H1 (cell line): ENCODE measurements at regions of chr5 and their contacts with region 1.

Region 1: DNA sequence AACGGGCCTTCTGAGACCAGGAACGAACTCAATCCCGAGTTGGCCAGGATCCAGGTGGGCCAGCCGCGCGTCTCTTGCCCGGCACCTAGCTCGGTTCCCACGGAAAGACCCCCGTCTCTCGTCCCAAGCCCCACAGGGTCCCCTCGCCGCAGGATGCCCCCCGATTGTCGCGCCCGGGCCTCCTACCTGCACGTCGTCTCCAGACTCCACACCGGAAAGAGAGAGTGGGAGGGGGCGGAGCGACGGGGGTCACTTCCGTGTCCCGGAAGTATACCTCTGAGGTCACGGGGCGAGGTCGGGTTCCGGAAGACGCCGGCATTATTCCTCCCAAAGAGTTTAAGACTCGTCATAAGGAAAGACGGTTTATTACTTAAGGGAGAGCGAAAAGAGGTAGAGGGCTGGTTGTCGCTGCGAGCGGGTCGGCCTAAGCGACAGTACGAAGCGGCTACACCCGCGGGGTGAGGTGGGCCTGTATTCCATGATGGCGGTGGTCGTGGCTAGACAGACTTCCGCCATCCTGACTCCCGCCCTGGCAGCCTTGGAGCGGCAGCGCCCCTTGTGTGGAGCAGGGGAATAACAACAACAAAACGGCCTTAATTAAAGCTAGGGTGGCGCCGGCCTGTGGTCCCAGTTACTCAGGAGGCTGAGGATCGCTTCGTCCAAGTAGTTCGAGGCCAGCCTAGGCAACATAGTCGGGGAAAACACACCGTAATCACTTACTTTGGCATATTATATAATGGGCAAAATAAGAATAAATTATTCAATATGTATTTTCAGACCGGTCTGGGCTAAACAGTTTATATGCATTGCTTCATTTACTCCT is at the start of gene RPS14:
- DNase-seq: peak; percentile 77 to 96
- H3K4me3 ChIP-seq: peak within 1 kb of the TSS; percentile 97 to 100 (median 98)
- H3K27ac ChIP-seq: peak within 1 kb of the TSS; percentile 99
- H3K4me1 ChIP-seq: peaks cover 0 to 15% (median 8%) of the 10 kb centered on the region in 4 experiments; a peak in 6 of 7 replicates
- H3K27me3 ChIP-seq: no peaks in the 10 kb centered on the region
- CTCF ChIP-seq: peak; percentile 78 to 93 (median 85)
- EP300 ChIP-seq: peak in 1 of 2 experiments; percentile 21; a peak in 1 of 3 replicates
- POLR2A ChIP-seq: peak; percentile 90 to 98
- RAD21 ChIP-seq: peak; percentile 33 to 46; a peak in 3 of 4 replicates
- total RNA-seq, gene RPS14: 2,548 and 2,599 TPM in 2 replicates

Region 2: GRCh38 chr5:150409638-150410523 is 39.8 kb before region 1 on chr5:
- CTCF ChIA-PET with region 1: interaction called, 4 read pairs
- POLR2A ChIA-PET with region 1: interaction called, 30 read pairs
- DNase-seq: peak; percentile 44 to 80
- H3K4me3 ChIP-seq: peak overlapping the region; percentile 9 to 37 (median 29); a peak in 6 of 8 replicates
- H3K27ac ChIP-seq: no peak overlapping the region
- H3K4me1 ChIP-seq: peaks cover 8 to 27% (median 13%) of the 10 kb centered on the region in 4 experiments
- H3K27me3 ChIP-seq: no peaks in the 10 kb centered on the region
- CTCF ChIP-seq: no peak
- EP300 ChIP-seq: no peak
- POLR2A ChIP-seq: no peak
- RAD21 ChIP-seq: no peak

Region 3: GRCh38 chr5:150464554-150465012 is 14.9 kb after region 1 on chr5:
- CTCF ChIA-PET with region 1: interaction called, 24 read pairs
- POLR2A ChIA-PET with region 1: interaction called, 51 read pairs
- DNase-seq: peak in 1 of 2 experiments; percentile 59
- H3K4me3 ChIP-seq: no peak overlapping the region
- H3K27ac ChIP-seq: no peak overlapping the region
- H3K4me1 ChIP-seq: peaks cover 3 to 24% (median 14%) of the 10 kb centered on the region in 4 experiments
- H3K27me3 ChIP-seq: no peaks in the 10 kb centered on the region
- CTCF ChIP-seq: no peak
- EP300 ChIP-seq: no peak
- POLR2A ChIP-seq: peak in 1 of 2 experiments; percentile 48; a peak in 2 of 3 replicates
- RAD21 ChIP-seq: no peak

Region 4: GRCh38 chr5:150486402-150487198 is 36.9 kb after region 1 on chr5:
- CTCF ChIA-PET with region 1: interaction called, 8 read pairs
- POLR2A ChIA-PET with region 1: interaction called, 29 read pairs
- DNase-seq: peak; percentile 63 to 86
- H3K4me3 ChIP-seq: peak overlapping the region; percentile 50 to 99 (median 74)
- H3K27ac ChIP-seq: peak overlapping the region; percentile 35; the same call in 1 of the 2 replicates
- H3K4me1 ChIP-seq: peaks cover 18 to 51% (median 41%) of the 10 kb centered on the region in 4 experiments
- H3K27me3 ChIP-seq: no peaks in the 10 kb centered on the region
- CTCF ChIP-seq: peak in 1 of 3 experiments; percentile 24; a peak in 2 of 4 replicates
- EP300 ChIP-seq: peak in 1 of 2 experiments; percentile 18; a peak in 1 of 3 replicates
- POLR2A ChIP-seq: peak in 1 of 2 experiments; percentile 14; a peak in 1 of 3 replicates
- RAD21 ChIP-seq: peak in 1 of 2 experiments; percentile 25; a peak in 1 of 4 replicates

Region 5: DNA sequence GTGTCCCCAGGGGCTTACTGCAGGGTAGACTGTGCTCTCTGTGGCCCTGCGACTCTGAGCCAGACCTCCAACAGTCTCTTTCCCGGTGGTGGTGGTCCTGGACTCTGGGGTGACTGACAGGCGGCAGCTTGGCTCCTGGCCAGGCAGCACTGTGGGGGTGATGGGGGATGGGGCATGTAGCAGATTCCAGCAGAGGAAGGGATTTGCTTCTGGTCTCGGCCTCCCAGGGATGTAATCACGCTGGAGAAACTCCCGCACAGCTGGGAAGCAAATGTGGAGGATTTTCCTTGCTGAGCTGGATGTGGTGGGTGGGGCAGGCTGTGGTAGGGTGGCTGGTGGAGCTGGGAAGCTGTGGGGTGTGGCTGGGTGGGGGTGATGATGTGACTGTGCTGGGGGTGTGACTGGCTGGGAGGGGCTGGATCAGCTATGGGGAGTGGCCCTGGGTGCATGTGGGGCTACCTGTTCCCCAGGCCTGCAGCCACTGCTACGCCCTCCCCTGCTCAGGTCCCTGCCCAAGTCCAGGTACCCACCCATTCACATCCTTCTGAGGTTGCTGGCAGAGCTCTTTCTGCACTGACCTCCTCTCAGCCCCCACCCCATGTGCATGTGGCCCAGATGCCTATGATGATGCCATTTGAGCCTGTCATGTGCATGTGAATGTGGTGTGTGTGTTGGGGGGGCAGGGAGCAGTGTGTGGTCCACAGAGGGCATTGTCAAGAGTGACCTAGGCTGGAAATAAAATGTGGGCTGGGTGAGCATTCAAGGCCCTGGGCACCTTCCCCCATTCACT is 62.0 kb after region 1 on chr5:
- CTCF ChIA-PET with region 1: interaction called, 11 read pairs
- POLR2A ChIA-PET with region 1: interaction called, 5 read pairs
- DNase-seq: no peak
- H3K4me3 ChIP-seq: peak overlapping the region in 1 of 4 experiments; percentile 4; a peak in 1 of 8 replicates
- H3K27ac ChIP-seq: 0 out of 2 replicates have a peak overlapping the region, but pooled peaks have one; percentile 26
- H3K4me1 ChIP-seq: peaks cover 21 to 41% (median 30%) of the 10 kb centered on the region in 4 experiments
- H3K27me3 ChIP-seq: no peaks in the 10 kb centered on the region
- CTCF ChIP-seq: no peak
- EP300 ChIP-seq: no peak; a peak in 1 of 3 replicates
- POLR2A ChIP-seq: no peak
- RAD21 ChIP-seq: 0 out of 4 replicates have a peak, but pooled peaks of 1 of the 2 experiments have one; percentile 3

Region 6: DNA sequence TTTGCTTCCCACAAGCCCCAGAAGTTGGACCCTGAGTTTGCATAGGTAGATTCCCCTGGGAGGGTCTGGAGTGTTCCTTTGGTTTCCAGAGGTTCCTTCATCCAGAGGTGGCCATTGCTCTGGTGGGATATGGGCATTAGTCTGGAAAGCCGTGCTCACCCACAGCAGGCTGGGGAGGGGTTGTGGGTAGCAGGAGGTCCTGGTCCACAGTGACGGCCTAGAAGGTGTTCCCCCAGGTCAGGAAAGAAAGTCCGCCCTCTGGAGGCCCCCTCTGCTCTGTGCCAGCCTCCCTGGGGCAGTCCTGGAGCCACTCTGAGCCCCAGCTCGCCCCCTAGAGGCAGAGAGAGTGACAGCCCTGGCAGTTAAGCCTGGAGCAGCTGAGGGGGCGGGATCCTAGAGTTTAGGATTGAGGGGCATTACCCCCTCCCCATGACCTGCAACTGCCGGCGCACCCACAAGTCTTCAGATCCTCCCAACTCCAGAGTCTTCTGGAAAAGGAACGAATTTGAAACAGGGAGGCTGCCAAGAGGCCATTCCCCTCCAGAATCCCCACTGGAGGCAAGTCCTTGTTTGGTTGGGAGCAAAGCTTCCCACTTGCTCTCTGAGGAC is 95.0 kb after region 1 on chr5:
- CTCF ChIA-PET with region 1: interaction called, 18 read pairs
- POLR2A ChIA-PET with region 1: interaction called, 15 read pairs
- DNase-seq: peak; percentile 67 to 97
- H3K4me3 ChIP-seq: no peak overlapping the region
- H3K27ac ChIP-seq: 0 out of 2 replicates have a peak overlapping the region, but pooled peaks have one; percentile 14
- H3K4me1 ChIP-seq: no peaks in the 10 kb centered on the region; a peak in 1 of 7 replicates
- H3K27me3 ChIP-seq: no peaks in the 10 kb centered on the region
- CTCF ChIP-seq: peak; percentile 99 to 100 (median 99)
- EP300 ChIP-seq: no peak
- POLR2A ChIP-seq: 0 out of 3 replicates have a peak, but pooled peaks of 1 of the 2 experiments have one; percentile 30
- RAD21 ChIP-seq: peak; percentile 81 to 89